Activated CD8-positive, alpha-beta memory T cell treated with anti-CD3 and anti-CD28 coated beads, Interleukin-2, amount 10 ng/mL, durations not matched to agents 7 days and 5 days (primary cell): ENCODE measurements at regions of chr20 and their contacts with region 1.

Region 1: DNA sequence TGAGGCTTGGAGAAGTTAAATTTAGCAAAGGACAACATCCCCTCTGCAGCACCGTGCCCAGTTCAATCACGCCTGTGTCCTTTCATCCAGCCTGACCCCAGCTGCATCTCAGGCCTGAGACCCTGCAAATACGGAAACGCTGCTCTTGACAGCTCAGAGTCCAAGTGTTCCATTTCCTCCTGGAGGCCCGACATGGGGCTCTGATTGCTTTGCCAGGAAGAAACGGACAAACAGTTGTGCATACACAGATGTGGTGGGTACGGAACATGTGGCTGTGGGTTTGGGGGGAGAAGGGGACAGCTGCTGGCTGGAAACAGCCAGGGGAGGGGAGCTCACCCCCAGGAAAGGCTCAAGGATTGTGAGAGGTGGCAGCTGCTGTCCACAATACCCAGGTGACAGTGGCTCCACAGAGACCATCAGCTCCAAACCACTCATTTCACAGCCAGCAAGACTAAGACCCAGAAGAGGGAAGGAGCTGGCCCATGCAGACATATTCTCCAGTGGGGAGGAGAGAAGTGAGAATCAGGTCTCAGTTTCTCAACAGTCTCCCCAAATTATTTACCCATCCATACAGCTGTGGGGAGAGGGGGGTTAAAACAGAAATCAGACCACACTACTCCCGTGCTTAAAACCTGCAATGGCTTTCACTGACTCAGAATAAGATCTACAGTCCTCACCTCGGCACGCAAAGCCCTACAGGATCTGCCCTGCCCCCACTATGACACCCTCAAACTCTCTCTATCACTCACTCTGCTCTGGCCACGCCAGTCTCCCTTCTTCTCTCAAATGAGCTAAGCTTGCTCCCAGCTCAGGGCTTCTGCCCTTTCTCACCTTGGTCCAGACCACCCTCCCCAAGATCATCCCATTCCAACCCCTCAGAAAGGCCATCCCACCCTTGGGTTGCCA is 89.1 kb downstream of the PREX1 start:
- DNase-seq: peak; percentile 94
- ATAC-seq: peak; percentile 88
- H3K4me3 Mint-ChIP-seq: peak overlapping the region; percentile 49
- H3K27ac Mint-ChIP-seq: peak overlapping the region; percentile 94
- H3K4me1 Mint-ChIP-seq: peaks cover 64% of the 10 kb centered on the region
- H3K27me3 Mint-ChIP-seq: no peaks in the 10 kb centered on the region

Region 2: GRCh38 chr20:48706173-48707015 is 32.3 kb before region 1 on chr20:
- CTCF ChIA-PET with region 1: no interaction called
- DNase-seq: no peak
- ATAC-seq: peak; percentile 16
- H3K4me3 Mint-ChIP-seq: no peak overlapping the region
- H3K27ac Mint-ChIP-seq: peak overlapping the region; percentile 75
- H3K4me1 Mint-ChIP-seq: peaks cover 50% of the 10 kb centered on the region
- H3K27me3 Mint-ChIP-seq: no peaks in the 10 kb centered on the region

Region 3: GRCh38 chr20:48722737-48723191 is 15.9 kb before region 1 on chr20:
- CTCF ChIA-PET with region 1: interaction called, 19 read pairs
- DNase-seq: peak; percentile 52
- ATAC-seq: peak; percentile 14
- H3K4me3 Mint-ChIP-seq: no peak overlapping the region
- H3K27ac Mint-ChIP-seq: peak overlapping the region; percentile 80
- H3K4me1 Mint-ChIP-seq: peaks cover 77% of the 10 kb centered on the region
- H3K27me3 Mint-ChIP-seq: no peaks in the 10 kb centered on the region

Region 4: GRCh38 chr20:48760403-48760983 is 21.8 kb after region 1 on chr20:
- CTCF ChIA-PET with region 1: interaction called, 23 read pairs
- DNase-seq: peak; percentile 91
- ATAC-seq: peak; percentile 77
- H3K4me3 Mint-ChIP-seq: peak overlapping the region; percentile 53
- H3K27ac Mint-ChIP-seq: peak overlapping the region; percentile 94
- H3K4me1 Mint-ChIP-seq: peaks cover 87% of the 10 kb centered on the region
- H3K27me3 Mint-ChIP-seq: no peaks in the 10 kb centered on the region

Region 5: DNA sequence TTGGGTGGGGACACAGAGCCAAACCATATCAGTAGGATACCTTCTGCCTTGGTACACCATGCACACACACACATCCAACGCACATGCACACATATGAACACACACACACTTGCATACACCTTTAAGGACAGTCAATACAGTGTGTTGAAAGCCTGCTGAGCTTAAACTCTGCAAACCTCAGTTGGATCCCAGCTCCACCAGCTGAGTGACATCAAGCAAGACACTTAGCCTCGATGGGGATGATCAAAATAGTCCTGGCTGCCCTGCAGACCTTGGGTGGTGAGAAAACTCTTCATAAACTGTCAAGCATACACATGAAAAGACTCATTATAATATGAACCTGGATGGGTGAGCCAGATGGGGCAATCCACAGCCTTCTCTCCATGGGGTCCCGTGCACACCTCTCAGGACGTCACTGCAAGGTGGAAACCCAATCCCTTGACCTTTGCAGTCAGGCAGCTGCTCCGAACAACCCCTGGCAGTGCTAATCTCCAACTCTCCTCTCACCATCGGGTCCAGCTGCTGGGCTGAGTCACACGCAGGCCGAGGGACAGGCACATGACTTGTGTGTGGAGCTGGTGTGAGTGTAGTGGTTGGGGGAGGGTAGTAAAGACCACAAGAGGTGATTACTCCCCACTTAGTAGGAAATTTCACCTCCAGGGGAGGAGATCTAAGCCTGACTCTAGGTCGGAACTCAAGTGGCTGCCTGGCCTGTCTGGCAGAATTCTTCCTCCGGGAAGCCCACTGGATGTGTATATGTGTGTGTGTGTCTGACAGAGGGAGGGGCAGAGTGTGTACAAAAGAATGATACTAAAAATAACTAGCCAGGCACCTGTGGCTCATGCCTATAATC is 115.2 kb after region 1 on chr20:
- CTCF ChIA-PET with region 1: no interaction called
- DNase-seq: no peak
- ATAC-seq: no peak
- H3K4me3 Mint-ChIP-seq: no peak overlapping the region
- H3K27ac Mint-ChIP-seq: no peak overlapping the region
- H3K4me1 Mint-ChIP-seq: peaks cover 10% of the 10 kb centered on the region
- H3K27me3 Mint-ChIP-seq: peaks cover 2% of the 10 kb centered on the region

Region 6: DNA sequence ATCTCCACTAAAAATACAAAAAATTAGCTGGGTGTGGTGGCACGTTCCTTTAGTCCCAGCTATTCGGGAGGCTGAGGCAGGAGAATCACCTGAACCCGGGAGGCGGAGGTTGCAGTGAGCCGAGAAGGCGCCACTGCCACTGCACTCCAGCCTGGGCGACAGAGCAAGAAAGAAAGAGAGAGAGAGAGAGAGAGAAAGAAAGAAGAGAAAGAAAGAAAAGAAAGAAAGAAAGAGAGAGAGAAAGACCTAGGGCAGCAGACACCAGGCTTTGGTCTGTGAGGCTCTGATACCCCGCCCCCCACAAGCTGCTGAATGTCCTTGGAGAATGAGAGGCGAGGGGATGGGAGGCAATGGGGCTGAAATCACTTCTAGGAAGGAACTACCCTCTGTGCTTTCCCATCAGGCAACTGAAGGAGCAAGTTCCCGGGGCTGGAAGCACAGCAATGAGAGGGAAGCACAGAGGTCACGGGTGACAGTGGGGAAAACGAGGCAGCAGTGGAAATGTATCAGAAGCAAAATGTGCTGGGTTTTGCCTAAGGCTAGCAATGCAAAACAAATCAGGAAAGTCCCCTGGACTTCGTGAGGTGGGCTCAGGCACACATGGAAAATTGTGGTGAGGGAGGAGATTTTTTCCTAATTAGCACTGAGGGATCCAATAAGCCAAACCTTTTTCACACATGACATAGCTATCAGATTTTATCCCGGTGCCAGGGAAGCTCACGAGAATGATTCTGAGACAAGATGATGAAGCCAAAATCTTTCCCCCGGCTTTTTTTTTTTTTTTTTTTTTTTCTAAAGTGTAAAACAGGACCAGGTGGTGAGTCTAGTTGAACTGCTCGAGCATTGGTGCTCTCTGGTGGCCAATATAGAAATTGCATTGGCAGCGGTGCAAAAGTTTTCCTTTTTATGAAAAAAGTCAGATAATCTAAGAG is 166.0 kb after region 1 on chr20:
- CTCF ChIA-PET with region 1: interaction called, 12 read pairs
- DNase-seq: peak; percentile 84
- ATAC-seq: peak; percentile 58
- H3K4me3 Mint-ChIP-seq: no peak overlapping the region
- H3K27ac Mint-ChIP-seq: no peak overlapping the region
- H3K4me1 Mint-ChIP-seq: peaks cover 30% of the 10 kb centered on the region
- H3K27me3 Mint-ChIP-seq: peaks cover 4% of the 10 kb centered on the region